ENCODE measurements at regions of chrX and their contacts with region 1.

Region 1: DNA sequence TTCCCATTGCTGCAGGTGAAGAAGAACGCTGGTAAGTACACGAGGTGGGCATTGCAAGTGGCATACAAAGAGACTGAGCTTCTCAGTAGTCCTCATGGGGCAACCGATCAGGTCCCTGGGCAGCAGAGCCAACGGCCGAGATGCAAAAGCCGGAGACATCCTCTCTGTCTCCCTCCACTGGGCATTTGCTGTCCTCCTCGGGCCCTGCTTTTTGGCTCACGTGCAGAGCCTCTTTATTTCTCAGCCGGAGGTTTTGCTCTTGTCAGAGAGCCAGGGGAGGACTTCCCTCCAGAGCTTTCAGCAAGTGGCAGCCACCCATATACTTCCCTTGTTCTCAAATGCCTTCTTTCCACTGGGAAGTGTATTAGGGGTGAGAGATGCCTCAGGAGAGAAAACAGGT is 18.0 kb downstream of the STARD8 start:
- H3K4me3 Mint-ChIP-seq: no peak overlapping the region
- H3K27ac Mint-ChIP-seq: peak overlapping the region; percentile 94
- H3K4me1 Mint-ChIP-seq: peaks cover 47% of the 10 kb centered on the region
- H3K27me3 Mint-ChIP-seq: no peaks in the 10 kb centered on the region

Region 2: GRCh38 chrX:68462653-68463052 is 202.8 kb before region 1 on chrX:
- intact Hi-C with region 1: no loop called
- H3K4me3 Mint-ChIP-seq: no peak overlapping the region
- H3K27ac Mint-ChIP-seq: no peak overlapping the region
- H3K4me1 Mint-ChIP-seq: no peaks in the 10 kb centered on the region
- H3K27me3 Mint-ChIP-seq: no peaks in the 10 kb centered on the region

Region 3: DNA sequence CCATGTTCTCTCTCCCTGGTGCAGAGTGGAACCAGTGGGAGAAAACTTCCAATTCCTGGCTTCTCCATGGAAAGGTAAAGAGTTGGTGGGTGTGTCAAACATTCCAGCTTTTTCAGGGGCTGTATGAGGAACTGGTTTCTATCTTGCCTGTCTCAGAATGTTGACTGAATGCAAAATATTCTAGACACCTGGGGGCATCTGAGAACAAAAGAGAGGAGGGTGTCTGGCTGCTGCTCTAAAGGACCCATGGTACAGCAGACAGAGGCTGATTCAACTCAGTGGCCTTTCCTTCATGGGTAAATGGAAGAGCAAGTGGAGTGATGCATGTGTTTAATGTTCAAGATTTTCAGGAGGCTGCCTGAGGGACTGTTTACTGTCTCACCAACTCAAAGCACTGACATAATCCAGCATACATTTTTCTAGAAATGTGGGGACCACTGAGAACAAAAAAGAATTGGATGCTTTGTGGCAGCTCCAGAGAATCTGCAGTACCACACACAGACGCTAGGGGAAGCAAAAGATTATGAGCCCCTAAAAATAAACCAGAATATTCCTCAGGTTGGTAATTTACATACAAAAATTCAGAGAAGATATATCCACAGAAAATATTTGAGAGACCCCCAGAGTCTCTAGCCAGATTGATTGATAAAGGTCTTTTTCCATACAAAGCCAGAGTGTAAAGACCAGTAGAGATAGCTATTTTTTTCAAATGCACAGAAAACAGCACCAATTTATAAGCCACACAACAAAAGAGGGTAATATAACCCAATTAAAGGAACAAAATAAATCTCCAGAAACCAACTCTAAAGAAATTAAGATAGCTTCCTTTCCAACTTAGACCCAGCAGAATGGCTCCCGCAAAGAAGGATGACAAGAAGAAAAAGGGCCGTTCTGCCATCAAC is 66.0 kb before region 1 on chrX:
- intact Hi-C with region 1: loop called (anchors 10 kb)
- H3K4me3 Mint-ChIP-seq: no peak overlapping the region
- H3K27ac Mint-ChIP-seq: no peak overlapping the region
- H3K4me1 Mint-ChIP-seq: peaks cover 11% of the 10 kb centered on the region
- H3K27me3 Mint-ChIP-seq: peaks cover 2% of the 10 kb centered on the region

Region 4: DNA sequence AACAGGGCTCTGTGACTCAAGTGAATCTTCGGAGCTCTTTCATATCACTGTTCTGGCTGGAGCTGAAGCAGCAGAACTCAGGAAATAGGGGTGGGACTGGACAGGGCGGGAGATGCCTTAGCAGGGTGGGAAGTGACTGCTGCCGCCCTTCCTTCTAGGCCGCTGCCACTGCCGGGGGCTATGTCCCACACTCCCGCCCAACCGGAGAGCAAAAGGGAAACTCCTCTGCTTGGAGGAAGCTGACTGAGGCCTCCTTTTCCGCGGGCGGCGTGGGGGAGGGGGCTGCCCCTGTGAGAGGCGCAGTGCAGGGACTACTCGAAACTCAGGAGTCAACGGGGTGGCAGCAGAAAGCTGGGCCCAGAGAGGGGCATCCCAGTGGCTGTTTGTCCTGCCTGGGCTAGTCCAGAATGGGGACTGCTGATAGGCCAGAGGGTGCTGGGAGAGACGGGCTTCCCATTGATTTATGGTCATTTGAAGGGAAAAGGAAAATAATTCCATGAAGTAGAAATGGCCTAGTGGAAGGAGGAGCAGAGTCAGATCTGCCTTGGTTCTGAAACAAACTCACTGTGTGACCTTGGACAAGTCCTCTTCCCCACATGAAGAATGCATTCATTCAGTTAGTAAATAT is 18.9 kb after region 1 on chrX:
- intact Hi-C with region 1: loop called (anchors 1 kb)
- H3K4me3 Mint-ChIP-seq: peak overlapping the region; percentile 9
- H3K27ac Mint-ChIP-seq: peak overlapping the region; percentile 97
- H3K4me1 Mint-ChIP-seq: peaks cover 45% of the 10 kb centered on the region
- H3K27me3 Mint-ChIP-seq: no peaks in the 10 kb centered on the region

Region 5: DNA sequence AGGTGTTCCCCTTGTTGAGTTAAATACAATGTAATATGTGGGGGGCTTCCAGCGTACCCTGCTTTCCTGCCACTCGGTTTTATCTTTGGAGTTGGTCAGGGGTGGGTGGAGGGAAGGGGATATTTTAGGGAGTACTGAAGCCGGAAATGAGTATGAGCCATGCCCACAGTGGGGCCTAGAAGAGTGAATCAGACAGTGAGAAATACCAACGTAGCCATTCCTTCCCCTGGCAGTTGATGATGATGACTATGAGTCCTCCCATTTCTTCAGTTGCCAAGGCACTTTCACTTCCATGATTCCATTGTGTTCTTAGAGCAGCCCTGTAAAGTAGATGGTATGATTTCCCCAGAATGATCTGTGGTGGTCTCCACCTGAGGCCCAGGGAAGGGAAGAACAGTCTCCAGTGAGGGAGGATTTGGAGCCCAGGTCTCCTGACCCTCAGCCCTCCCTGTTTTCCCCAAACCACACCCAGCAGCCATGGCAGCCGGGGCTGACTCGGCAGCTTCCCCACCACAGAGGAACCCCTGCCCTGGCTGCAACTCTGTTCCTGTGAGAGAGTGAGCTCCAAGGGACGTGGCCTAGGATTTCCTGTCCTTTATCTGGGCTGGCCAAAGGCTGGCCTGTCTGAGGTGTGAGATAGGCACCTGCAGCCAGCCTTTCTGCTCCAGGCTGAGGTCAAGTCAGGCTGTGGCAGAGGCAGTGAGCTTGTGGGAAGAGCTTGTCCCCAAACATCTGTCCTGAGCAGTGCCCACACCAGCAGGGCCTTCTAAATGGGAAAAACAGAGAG is 34.7 kb after region 1 on chrX:
- intact Hi-C with region 1: loop called (anchors 1 kb)
- H3K4me3 Mint-ChIP-seq: peak overlapping the region; percentile 58
- H3K27ac Mint-ChIP-seq: peak overlapping the region; percentile 96
- H3K4me1 Mint-ChIP-seq: peaks cover 90% of the 10 kb centered on the region
- H3K27me3 Mint-ChIP-seq: no peaks in the 10 kb centered on the region

Region 6: GRCh38 chrX:70190225-70190624 is 1524.7 kb after region 1 on chrX:
- intact Hi-C with region 1: no loop called
- H3K4me3 Mint-ChIP-seq: no peak overlapping the region
- H3K27ac Mint-ChIP-seq: no peak overlapping the region
- H3K4me1 Mint-ChIP-seq: no peaks in the 10 kb centered on the region
- H3K27me3 Mint-ChIP-seq: no peaks in the 10 kb centered on the region